Adrenal gland (tissue), 19 donors: ENCODE measurements at regions of chr10 and their contacts with region 1.

Region 1: GRCh38 chr10:103859161-103860086 is 4.0 kb upstream of the SH3PXD2A start:
- DNase-seq: peak; percentile 40 to 76 (median 66)
- H3K4me3 ChIP-seq: no peak overlapping the region
- H3K27ac ChIP-seq: no peak overlapping the region
- H3K4me1 ChIP-seq: peaks cover 7% of the 10 kb centered on the region in 2 donors
- H3K27me3 ChIP-seq: no peaks in the 10 kb centered on the region
- CTCF ChIP-seq: peak; percentile 64 to 75 (median 70)
- POLR2A ChIP-seq: no peak

Region 2: GRCh38 chr10:103712570-103713498 is 146.6 kb before region 1 on chr10:
- intact Hi-C with region 1: loop called (anchors 2 kb)
- DNase-seq: peak; percentile 62 to 96 (median 84)
- H3K4me3 ChIP-seq: no peak overlapping the region
- H3K27ac ChIP-seq: no peak overlapping the region
- H3K4me1 ChIP-seq: peaks cover under 1 to 7% of the 10 kb centered on the region in 2 donors
- H3K27me3 ChIP-seq: no peaks in the 10 kb centered on the region
- CTCF ChIP-seq: peak; percentile 70 to 97 (median 94)
- POLR2A ChIP-seq: no peak

Region 3: DNA sequence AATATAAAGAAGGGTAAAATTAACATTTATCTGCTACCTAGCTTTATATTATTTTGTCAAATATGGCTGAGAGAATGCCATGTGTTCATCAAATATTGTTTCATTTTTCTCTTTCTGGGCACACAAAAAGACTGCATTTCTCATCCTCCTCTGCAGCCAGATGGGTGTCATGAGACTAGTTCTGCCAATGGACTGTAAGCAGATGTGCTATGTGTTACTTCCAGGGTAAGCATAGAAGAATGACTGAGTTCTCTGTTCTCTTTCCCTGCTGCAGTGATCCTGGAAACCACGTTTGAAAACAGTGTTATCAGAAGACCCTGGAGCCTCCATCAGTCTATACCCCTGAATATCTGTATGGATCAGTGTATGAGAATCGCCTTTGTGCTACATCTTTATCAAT is 83.4 kb after region 1 on chr10:
- intact Hi-C with region 1: no loop called
- DNase-seq: no peak
- H3K4me3 ChIP-seq: no peak overlapping the region
- H3K27ac ChIP-seq: no peak overlapping the region
- H3K4me1 ChIP-seq: no peaks in the 10 kb centered on the region
- H3K27me3 ChIP-seq: no peaks in the 10 kb centered on the region
- CTCF ChIP-seq: no peak
- POLR2A ChIP-seq: no peak